ENCODE measurements at regions of chr3 and their contacts with region 1.

Region 1: DNA sequence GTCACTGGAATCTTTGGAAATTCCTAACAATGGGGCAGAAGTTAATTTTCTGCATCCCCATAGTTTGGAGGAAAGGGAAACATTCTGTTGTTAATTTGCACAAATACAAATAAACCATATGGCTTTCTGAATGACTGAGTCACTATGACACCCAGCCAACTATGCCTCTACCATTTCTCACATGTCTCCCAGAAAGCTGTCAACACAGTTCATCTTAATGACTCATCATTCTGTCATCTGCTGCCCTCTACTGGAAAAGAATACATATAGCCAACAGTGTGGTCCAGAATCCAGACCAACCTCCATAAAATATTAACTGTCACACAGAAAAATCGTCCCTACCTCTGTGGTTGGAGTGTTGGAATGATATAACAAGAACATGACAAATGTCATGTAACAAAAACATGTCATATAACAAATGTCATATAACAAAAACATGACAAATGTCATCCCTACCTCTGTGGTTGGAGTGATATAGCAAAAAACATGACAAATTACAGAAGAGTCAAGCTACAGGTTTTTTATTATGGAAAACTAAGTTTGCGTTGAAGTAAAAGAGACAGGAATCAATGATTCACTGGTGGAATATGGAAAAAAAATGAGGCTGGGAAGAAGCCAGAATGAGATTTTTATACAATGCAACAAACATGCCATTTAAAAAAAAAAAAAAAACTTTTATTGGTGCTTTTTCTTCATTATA is 47.7 kb upstream of the GYG1 start:
- DNase-seq: peak in 4 of 7 donors; percentile 25 to 42 (median 36)
- H3K4me3 ChIP-seq: no peak overlapping the region
- H3K27ac ChIP-seq: no peak overlapping the region
- H3K4me1 ChIP-seq: no peaks in the 10 kb centered on the region
- H3K27me3 ChIP-seq: no peaks in the 10 kb centered on the region
- CTCF ChIP-seq: peak; percentile 49 to 88 (median 76)
- POLR2A ChIP-seq: no peak

Region 2: DNA sequence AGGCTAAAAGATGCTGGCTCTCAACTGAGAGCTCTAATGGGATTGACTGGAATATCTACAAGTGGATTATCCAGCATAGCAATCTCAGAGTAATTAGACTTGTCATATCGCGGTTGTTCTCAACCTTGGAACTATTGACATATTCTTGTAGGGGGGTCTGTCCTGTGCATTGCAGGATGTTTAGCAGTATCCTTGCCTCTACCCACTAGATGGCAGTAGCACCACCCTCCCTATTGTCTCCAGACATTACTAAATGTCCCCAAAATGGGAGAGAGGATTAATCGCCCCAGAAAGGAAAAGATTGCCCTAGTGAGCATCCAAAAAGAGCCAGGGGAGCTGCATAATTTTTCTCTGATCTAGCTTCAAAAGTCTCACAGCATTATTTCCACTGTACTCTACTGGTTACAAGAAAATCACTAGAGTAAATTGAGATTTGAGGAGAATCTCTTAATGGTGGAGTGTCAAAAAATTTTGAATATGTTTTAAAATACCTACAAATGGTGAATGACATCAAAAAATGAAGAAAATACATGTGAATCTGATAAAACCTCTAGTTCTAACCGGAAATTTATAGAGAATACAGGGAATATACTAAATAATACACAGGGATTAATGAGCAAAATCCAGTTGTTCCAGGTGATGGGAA is 634.1 kb before region 1 on chr3:
- intact Hi-C with region 1: loop called in 1 of 2 experiments (anchors 10 kb)
- DNase-seq: peak in 6 of 7 donors; percentile 15 to 50 (median 25)
- H3K4me3 ChIP-seq: no peak overlapping the region
- H3K27ac ChIP-seq: no peak overlapping the region
- H3K4me1 ChIP-seq: no peaks in the 10 kb centered on the region
- H3K27me3 ChIP-seq: no peaks in the 10 kb centered on the region
- CTCF ChIP-seq: peak; percentile 7 to 64 (median 50)
- POLR2A ChIP-seq: no peak

Region 3: GRCh38 chr3:148379763-148380382 is 563.8 kb before region 1 on chr3:
- intact Hi-C with region 1: loop called in 1 of 2 experiments (anchors 5 kb)
- DNase-seq: no peak
- H3K4me3 ChIP-seq: no peak overlapping the region
- H3K27ac ChIP-seq: no peak overlapping the region
- H3K4me1 ChIP-seq: no peaks in the 10 kb centered on the region
- H3K27me3 ChIP-seq: no peaks in the 10 kb centered on the region
- CTCF ChIP-seq: peak; percentile 12 to 66 (median 59)
- POLR2A ChIP-seq: no peak

Region 4: GRCh38 chr3:148727247-148727646 is 216.4 kb before region 1 on chr3:
- intact Hi-C with region 1: loop called in 1 of 2 experiments (anchors 5 kb)
- DNase-seq: peak; percentile 62 to 81 (median 70)
- H3K4me3 ChIP-seq: no peak overlapping the region
- H3K27ac ChIP-seq: peak overlapping the region in 2 of 5 donors; percentile 39 to 47
- H3K4me1 ChIP-seq: peaks cover 8 to 51% of the 10 kb centered on the region in 2 donors
- H3K27me3 ChIP-seq: no peaks in the 10 kb centered on the region
- CTCF ChIP-seq: peak; percentile 34 to 67 (median 58)
- POLR2A ChIP-seq: no peak

Region 5: DNA sequence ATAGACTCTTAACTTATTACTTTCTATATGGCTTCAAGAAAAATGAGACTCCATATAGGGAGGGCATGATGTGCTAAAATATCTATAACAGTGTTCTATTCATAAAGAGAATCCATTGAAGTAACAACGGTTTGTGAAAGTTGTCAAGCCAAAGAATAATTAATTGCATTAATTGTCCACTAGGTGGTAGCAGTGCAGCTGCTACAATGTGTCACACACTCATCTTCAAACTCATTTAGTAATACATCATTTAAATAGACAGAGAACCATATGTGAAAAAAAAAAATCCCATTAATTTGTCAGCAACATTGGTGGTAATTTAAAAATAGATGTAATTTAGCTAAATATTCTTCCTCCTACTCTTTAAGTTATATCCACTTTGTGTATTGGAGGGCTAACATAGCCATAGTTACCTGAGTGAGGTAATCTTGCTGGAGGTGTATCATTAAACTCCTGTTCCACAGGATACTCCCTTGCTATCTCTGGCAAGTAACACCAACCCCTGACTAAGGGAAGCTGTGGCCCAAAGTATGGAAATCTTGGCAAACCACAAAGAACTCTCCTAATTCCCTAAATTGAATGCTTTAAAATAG is 82.3 kb before region 1 on chr3:
- intact Hi-C with region 1: loop called (anchors 5 kb)
- DNase-seq: no peak
- H3K4me3 ChIP-seq: no peak overlapping the region
- H3K27ac ChIP-seq: no peak overlapping the region
- H3K4me1 ChIP-seq: peaks cover 0 to 4% of the 10 kb centered on the region in 2 donors
- H3K27me3 ChIP-seq: no peaks in the 10 kb centered on the region
- CTCF ChIP-seq: peak; percentile 57 to 82 (median 77)
- POLR2A ChIP-seq: no peak